A549 (cell line): ENCODE measurements at regions of chr10 and their contacts with region 1.

Region 1: DNA sequence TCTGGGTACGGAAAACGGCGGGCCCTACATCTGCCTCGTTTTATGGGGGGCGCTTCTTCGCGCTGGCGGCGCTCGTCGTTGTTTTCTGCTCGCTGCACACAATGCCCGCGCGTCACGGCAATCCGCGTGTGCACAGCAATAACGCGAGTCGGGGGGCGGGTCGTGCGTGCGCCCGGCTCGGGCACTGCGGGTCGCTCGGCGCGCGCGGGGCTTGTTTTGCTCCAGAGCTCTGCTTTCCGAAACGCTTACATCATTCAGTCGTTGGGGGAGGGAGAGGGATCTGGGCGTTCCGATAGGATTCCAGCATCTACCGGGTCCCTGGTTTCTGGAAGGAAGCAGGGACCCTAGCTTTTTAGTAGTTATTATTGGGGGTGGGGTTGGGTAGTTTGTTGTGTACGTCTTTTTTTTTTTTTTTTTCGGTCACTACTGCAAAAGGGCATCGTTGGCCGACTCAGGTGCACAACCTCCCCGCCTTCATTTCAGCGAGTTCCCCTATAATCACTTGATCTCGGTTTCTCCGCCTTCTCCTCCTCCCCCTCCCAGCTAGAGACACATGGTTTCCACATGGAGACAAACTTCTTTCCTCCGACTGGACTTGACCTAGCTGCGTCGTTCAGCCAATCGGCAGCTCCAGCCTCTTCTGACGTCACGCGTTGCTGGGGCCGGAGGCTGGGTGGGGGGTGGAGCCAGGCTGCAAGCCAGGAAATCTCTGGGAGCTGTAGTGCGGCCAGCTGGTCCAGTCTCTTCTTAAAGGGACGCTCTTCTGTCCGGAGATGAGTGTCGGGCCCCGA is 3.5 kb downstream of the MXI1 start:
- DNase-seq: peak; percentile 98 to 100
- ATAC-seq: peak; percentile 49 to 76
- H3K4me3 ChIP-seq: peak overlapping the region; percentile 64
- H3K27ac ChIP-seq: peak overlapping the region; percentile 82 to 90
- H3K4me1 ChIP-seq: peaks cover 20% of the 10 kb centered on the region
- CTCF ChIP-seq: no peak
- EP300 ChIP-seq: no peak
- POLR2A ChIP-seq: no peak
- RAD21 ChIP-seq: no peak

Region 2: DNA sequence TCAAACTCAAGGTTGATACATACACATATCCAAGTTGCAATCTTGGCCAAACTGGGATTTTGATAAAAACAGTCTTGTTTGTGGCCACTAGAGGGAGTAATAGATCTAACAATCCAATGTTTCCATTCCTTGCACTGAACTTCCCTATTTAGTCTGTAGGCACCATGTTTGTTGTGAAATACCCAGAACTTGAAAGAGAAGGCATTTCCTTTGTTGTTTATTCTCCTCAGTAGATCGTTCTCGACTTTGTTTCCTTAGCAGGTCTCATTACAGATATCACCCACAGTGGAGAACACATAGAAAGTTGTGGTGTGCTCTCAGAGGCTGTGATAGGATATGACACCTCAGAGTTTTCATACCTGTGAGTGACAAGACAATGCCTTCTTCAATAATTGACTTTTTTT is 73.7 kb before region 1 on chr10:
- CTCF ChIA-PET with region 1: interaction called, 40 read pairs
- POLR2A ChIA-PET with region 1: no interaction called
- DNase-seq: peak; percentile 50 to 77
- ATAC-seq: peak; percentile 88 to 89
- H3K4me3 ChIP-seq: no peak overlapping the region
- H3K27ac ChIP-seq: no peak overlapping the region
- H3K4me1 ChIP-seq: no peaks in the 10 kb centered on the region
- CTCF ChIP-seq: peak; percentile 90
- EP300 ChIP-seq: no peak
- POLR2A ChIP-seq: no peak
- RAD21 ChIP-seq: peak; percentile 87 to 90

Region 3: GRCh38 chr10:110225756-110226542 is 15.1 kb after region 1 on chr10:
- CTCF ChIA-PET with region 1: interaction called, 176 read pairs
- POLR2A ChIA-PET with region 1: interaction called, 24 read pairs
- DNase-seq: peak; percentile 74 to 93
- ATAC-seq: peak; percentile 80 to 85
- H3K4me3 ChIP-seq: peak overlapping the region; percentile 65
- H3K27ac ChIP-seq: peak overlapping the region; percentile 78 to 89
- H3K4me1 ChIP-seq: peaks cover 10% of the 10 kb centered on the region; the same call in 2 of the 3 replicates
- CTCF ChIP-seq: peak; percentile 91
- EP300 ChIP-seq: no peak
- POLR2A ChIP-seq: no peak; the same call in 1 of the 2 replicates
- RAD21 ChIP-seq: peak in 1 of 2 experiments; percentile 55; a peak in 3 of 5 replicates

Region 4: DNA sequence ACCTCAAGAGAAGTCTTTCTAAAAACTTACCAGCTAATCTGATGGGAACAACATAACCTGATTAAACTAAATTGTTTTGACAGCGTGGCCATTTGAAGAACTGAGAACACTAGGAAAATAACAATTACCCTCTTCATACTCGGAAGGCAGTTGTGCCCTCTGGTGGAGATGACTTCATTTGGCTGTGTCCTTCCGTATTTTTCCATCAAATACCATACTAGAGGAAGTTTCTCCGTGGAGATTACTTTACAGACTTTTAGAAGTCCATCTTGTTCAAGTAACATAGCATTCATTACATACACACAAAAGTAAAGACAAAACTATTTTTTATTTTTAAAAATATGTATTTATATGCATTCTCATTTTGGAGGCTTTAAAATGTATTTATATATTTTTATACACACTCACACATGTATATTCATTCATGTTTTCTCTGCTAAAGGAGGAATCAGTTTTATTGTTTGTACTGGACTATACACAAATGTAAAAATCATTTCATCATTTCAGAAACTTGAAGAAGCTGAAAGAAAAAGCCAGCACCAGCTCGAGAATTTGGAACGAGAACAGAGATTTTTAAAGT is 68.6 kb after region 1 on chr10:
- CTCF ChIA-PET with region 1: interaction called, 43 read pairs
- POLR2A ChIA-PET with region 1: interaction called, 10 read pairs
- DNase-seq: peak; percentile 37 to 69
- ATAC-seq: peak; percentile 74 to 88; a peak in 5 of 6 replicates
- H3K4me3 ChIP-seq: no peak overlapping the region
- H3K27ac ChIP-seq: no peak overlapping the region
- H3K4me1 ChIP-seq: 0 out of 3 replicates have a peak, but pooled peaks cover 2% of the 10 kb centered on the region
- CTCF ChIP-seq: peak; percentile 96
- EP300 ChIP-seq: no peak
- POLR2A ChIP-seq: no peak
- RAD21 ChIP-seq: peak; percentile 91 to 92

Region 5: GRCh38 chr10:110304780-110305421 is 94.0 kb after region 1 on chr10 and contains the start of gene SMNDC1:
- CTCF ChIA-PET with region 1: interaction called, 11 read pairs
- POLR2A ChIA-PET with region 1: interaction called, 20 read pairs
- DNase-seq: peak; percentile 86 to 99
- ATAC-seq: peak; percentile 91 to 95
- H3K4me3 ChIP-seq: peak within 1 kb of the TSS; percentile 93
- H3K27ac ChIP-seq: peak within 1 kb of the TSS; percentile 97 to 98
- H3K4me1 ChIP-seq: peaks cover 57% of the 10 kb centered on the region
- CTCF ChIP-seq: no peak
- EP300 ChIP-seq: no peak
- POLR2A ChIP-seq: peak; percentile 28; the same call in 1 of the 2 replicates
- RAD21 ChIP-seq: no peak; a peak in 1 of 5 replicates
- polyA plus RNA-seq, gene SMNDC1: 35.4 and 40.2 TPM in 2 replicates

Region 6: GRCh38 chr10:110794808-110795207 is 583.9 kb after region 1 on chr10:
- CTCF ChIA-PET with region 1: no interaction called
- POLR2A ChIA-PET with region 1: no interaction called
- DNase-seq: no peak
- ATAC-seq: no peak
- H3K4me3 ChIP-seq: no peak overlapping the region
- H3K27ac ChIP-seq: no peak overlapping the region
- H3K4me1 ChIP-seq: no peaks in the 10 kb centered on the region
- CTCF ChIP-seq: no peak
- EP300 ChIP-seq: no peak
- POLR2A ChIP-seq: no peak
- RAD21 ChIP-seq: no peak